GM12878 (cell line): ENCODE measurements at regions of chr18 and their contacts with region 1.

Region 1: GRCh38 chr18:49412679-49413078 is 47.8 kb downstream of the DYM start:
- DNase-seq: no peak
- ATAC-seq: no peak
- H3K4me3 ChIP-seq: no peak overlapping the region
- H3K27ac ChIP-seq: no peak overlapping the region
- H3K4me1 ChIP-seq: no peaks in the 10 kb centered on the region
- H3K27me3 ChIP-seq: no peaks in the 10 kb centered on the region
- CTCF ChIP-seq: no peak
- EP300 ChIP-seq: no peak
- POLR2A ChIP-seq: no peak
- RAD21 ChIP-seq: no peak

Region 2: DNA sequence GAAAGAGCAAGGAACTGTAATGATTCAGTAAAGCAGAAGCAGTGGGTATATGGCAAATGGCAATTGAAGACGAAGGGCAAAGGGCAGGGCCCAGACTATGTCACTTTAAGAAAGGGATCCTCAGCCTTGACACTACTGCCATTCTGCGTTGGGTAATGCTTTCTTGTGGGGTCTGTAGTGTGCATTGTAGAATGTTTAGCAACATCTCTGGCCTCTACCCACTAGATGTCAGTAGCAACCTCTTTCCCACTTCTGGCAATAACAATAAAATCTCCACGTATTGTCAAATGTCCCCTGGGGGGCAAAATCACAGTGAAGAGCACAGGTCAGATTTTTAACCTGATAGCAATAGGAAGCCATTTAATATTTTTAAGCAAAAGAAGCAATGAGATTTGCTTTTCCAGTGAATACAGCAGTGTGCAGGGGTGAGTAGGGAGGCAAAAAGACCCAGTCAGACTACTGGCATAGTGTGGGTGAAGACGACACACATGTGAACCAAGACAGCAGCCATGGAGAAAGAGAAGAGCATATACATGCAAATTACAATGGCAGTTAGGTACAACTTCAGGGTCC is 161.8 kb before region 1 on chr18:
- CTCF ChIA-PET with region 1: interaction called, 13 read pairs
- POLR2A ChIA-PET with region 1: no interaction called
- RAD21 ChIA-PET with region 1: no interaction called
- SMC1A ChIA-PET with region 1: interaction called, 5 read pairs
- in situ Hi-C with region 1: no loop called
- intact Hi-C with region 1: loop called (anchors 2 kb)
- DNase-seq: no peak
- ATAC-seq: peak; percentile 56
- H3K4me3 ChIP-seq: no peak overlapping the region
- H3K27ac ChIP-seq: no peak overlapping the region
- H3K4me1 ChIP-seq: no peaks in the 10 kb centered on the region
- H3K27me3 ChIP-seq: no peaks in the 10 kb centered on the region
- CTCF ChIP-seq: peak; percentile 24 to 41 (median 34); a peak in 4 of 6 replicates
- EP300 ChIP-seq: no peak
- POLR2A ChIP-seq: no peak
- RAD21 ChIP-seq: peak; percentile 62